ENCODE measurements at regions of chr4 and their contacts with region 1.

Region 1: DNA sequence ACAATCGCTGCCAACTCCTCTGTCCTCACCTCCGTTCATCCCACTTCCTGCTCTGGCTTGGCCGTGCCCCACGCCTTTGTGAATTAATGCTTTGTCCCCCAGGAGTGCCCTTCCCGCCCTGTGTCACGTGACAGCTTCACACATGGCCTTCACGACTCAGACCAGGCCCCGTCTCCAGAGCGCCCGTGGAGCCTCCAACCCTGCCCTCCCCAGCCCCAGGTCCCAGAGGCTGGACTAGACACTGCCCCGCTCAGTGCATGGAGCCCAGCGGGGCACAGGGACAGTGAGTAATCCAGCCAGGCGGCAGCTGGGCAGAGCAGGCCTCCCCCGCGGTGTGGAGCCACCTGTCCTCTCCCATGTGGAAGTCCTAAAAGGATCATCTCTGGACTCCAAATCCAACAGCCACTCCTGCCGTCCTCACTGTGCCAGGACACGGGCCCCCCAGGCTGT is 7.4 kb downstream of the ADRA2C start:
- DNase-seq: no peak

Region 2: GRCh38 chr4:3945511-3946290 is 172.1 kb after region 1 on chr4:
- intact Hi-C with region 1: loop called in 1 of 2 experiments (anchors 10 kb)
- DNase-seq: no peak

Region 3: GRCh38 chr4:4269856-4270255 is 496.3 kb after region 1 on chr4:
- intact Hi-C with region 1: no loop called
- DNase-seq: no peak

Measured in posterior vena cava (tissue), 2 donors.